ENCODE measurements at regions of chr10 and their contacts with region 1.

Region 1: GRCh38 chr10:63976538-63976937 is 455.3 kb downstream of the REEP3 start:
- DNase-seq: peak; percentile 54
- H3K4me3 Mint-ChIP-seq: no peak overlapping the region
- H3K27ac Mint-ChIP-seq: no peak overlapping the region
- H3K4me1 Mint-ChIP-seq: no peaks in the 10 kb centered on the region
- H3K27me3 Mint-ChIP-seq: no peaks in the 10 kb centered on the region

Region 2: GRCh38 chr10:63573068-63573697 is 403.4 kb before region 1 on chr10:
- CTCF ChIA-PET with region 1: no interaction called
- POLR2A ChIA-PET with region 1: no interaction called
- intact Hi-C with region 1: no loop called
- DNase-seq: no peak
- H3K4me3 Mint-ChIP-seq: no peak overlapping the region
- H3K27ac Mint-ChIP-seq: peak overlapping the region; percentile 40
- H3K4me1 Mint-ChIP-seq: peaks cover 28% of the 10 kb centered on the region
- H3K27me3 Mint-ChIP-seq: no peaks in the 10 kb centered on the region

Region 3: DNA sequence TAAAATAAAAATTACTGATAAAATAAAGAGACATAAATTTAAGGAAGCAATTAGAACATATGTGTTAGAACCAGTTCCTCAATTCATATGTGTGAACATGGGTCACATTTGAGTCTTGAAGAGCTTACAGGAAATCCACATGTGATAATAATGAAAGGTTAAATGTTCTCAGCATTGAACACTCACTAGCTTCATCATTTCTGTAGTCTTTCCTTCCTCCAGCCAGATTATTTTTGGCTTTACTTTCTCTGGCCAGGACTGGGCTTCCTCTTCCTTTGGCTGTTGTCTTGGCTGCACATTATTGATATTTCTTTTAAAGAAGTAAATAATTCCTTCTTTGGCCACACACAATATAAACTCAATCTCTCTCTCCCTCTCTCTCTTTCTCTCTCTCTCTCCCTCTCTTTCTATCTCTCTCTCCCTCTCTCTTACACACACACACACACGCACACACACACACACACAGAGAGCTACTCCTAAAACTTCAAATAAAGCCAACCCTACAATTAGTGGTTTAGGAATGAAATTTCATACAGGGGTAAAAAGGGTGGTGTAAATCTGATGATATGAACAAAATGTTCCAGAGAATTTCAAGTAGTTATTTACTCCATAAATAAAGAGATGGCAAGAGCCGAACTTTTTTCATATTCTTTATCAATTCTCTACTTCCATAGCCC is 284.2 kb before region 1 on chr10:
- CTCF ChIA-PET with region 1: no interaction called
- POLR2A ChIA-PET with region 1: no interaction called
- intact Hi-C with region 1: no loop called
- DNase-seq: no peak
- H3K4me3 Mint-ChIP-seq: no peak overlapping the region
- H3K27ac Mint-ChIP-seq: no peak overlapping the region
- H3K4me1 Mint-ChIP-seq: no peaks in the 10 kb centered on the region
- H3K27me3 Mint-ChIP-seq: peaks cover 1% of the 10 kb centered on the region

Region 4: DNA sequence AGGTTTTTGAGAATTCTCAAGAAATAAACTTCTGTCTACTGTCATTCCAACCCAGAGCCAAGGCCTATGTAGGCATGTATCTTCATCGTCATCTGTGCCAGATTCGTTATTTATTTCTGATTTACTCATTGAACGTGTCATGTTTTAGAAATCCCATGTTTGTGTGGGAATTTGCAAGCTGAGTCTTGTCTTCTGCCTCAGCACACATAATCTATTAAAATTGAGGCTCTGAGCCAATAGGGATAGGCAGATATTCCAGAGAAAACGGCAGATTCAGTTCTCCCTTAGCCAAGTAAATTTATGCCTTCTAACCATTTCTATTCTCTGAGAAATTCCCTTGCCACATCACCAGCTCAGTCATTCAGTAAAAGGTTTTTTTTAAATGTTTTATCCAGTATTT is 10.7 kb before region 1 on chr10:
- CTCF ChIA-PET with region 1: interaction called, 15 read pairs
- POLR2A ChIA-PET with region 1: no interaction called
- intact Hi-C with region 1: no loop called
- DNase-seq: no peak
- H3K4me3 Mint-ChIP-seq: no peak overlapping the region
- H3K27ac Mint-ChIP-seq: no peak overlapping the region
- H3K4me1 Mint-ChIP-seq: no peaks in the 10 kb centered on the region
- H3K27me3 Mint-ChIP-seq: peaks cover 5% of the 10 kb centered on the region

Region 5: GRCh38 chr10:64023926-64024470 is 47.5 kb after region 1 on chr10:
- CTCF ChIA-PET with region 1: no interaction called
- POLR2A ChIA-PET with region 1: no interaction called
- intact Hi-C with region 1: no loop called
- DNase-seq: no peak
- H3K4me3 Mint-ChIP-seq: no peak overlapping the region
- H3K27ac Mint-ChIP-seq: no peak overlapping the region
- H3K4me1 Mint-ChIP-seq: no peaks in the 10 kb centered on the region
- H3K27me3 Mint-ChIP-seq: peaks cover 2% of the 10 kb centered on the region